ENCODE measurements at regions of chr12 and their contacts with region 1.

Region 1: DNA sequence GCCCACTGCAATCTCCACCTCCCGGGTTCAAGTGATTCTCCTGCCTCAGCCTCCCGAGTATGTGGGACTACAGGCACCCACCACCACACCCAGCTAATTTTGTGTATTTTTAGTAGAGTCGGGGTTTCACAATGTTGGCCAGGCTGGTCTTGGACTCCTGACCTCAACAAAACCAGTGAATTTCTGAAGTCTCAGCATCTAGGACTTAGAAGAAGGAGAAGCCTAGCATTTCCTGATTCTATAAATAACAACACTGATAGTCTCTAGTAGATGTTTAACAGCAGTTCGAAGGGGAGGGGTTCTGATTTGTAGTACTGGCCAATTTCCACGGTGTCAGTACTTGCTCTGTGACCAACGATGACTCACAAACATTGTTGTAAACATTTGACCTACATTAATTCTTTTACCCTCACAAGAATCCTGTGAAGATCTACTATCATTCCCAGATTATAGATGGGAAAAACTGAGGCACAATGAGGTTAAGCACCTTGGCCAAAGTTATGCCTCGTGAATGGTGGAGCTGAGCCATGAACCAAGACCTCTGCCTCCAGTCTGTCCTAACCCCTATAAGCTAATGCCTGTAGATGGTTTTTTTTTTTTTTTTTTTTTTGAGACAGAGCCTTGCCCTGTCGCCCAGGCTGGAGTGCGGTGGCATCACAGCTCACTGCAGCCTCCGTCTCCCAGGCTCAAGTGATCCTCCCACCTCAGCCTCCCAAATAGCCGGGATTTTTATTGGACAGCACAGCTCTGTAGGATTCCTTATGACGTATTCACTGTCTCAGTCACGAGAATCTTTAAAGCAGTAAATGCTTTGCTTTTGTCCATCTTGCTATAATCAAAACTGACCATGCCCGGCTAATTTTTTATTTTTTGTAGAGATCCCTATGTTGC is 5.2 kb downstream of the P2RX4 start:
- DNase-seq: peak; percentile 76
- H3K4me3 Mint-ChIP-seq: peak overlapping the region; percentile 19
- H3K27ac Mint-ChIP-seq: peak overlapping the region; percentile 78
- H3K4me1 Mint-ChIP-seq: peaks cover 37% of the 10 kb centered on the region
- H3K27me3 Mint-ChIP-seq: no peaks in the 10 kb centered on the region
- CTCF ChIP-seq: no peak

Region 2: DNA sequence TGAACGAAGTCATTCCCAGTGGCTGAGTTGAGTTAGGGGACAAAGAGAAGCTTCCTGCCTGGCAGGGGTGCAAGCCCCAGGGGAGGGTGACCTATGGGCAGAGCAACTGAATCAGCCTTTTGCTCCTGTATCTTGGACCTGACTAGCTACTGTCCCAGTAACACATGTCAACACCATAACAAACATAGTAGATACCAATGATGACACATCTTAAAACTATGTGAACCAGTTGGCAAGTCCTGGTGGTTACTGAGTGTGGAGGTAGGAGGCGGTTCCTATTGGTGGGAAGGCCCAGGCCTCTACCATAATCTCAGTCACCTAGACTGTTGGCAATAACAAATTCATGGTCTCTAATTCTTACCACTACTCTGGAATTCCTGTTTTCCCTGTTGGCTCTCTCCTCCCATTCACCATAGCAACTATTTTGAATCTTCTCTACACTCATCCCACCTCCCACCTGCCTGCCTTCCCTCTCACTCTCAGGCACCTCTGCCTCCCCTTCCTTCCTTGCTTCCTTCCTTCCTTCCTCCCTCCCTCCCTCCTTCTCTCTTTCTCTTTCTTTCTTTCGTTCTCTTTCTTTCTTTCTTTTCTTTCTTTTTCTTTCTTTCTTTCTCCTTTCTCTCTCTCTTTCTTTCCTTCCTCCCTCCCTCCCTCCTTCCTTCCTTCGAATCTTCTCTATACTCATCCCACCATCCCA is 90.5 kb before region 1 on chr12:
- CTCF ChIA-PET with region 1: no interaction called
- intact Hi-C with region 1: loop called (anchors 5 kb)
- DNase-seq: peak; percentile 80
- H3K4me3 Mint-ChIP-seq: no peak overlapping the region
- H3K27ac Mint-ChIP-seq: peak overlapping the region; percentile 86
- H3K4me1 Mint-ChIP-seq: peaks cover 33% of the 10 kb centered on the region
- H3K27me3 Mint-ChIP-seq: peaks cover 3% of the 10 kb centered on the region
- CTCF ChIP-seq: no peak

Measured in Calu3 (cell line).